ENCODE measurements at regions of chr20 and their contacts with region 1.

Region 1: GRCh38 chr20:23459461-23460150 is 6.9 kb upstream of the CST11 start:
- DNase-seq: no peak

Region 2: GRCh38 chr20:24089576-24089975 is 630.0 kb after region 1 on chr20:
- intact Hi-C with region 1: loop called in 1 of 2 experiments (anchors 5 kb)
- DNase-seq: no peak